Mammary epithelial cell (primary cell): ENCODE measurements at regions of chrX and their contacts with region 1.

Region 1: GRCh38 chrX:13700380-13700779 is 11.5 kb downstream of the RAB9A start:
- DNase-seq: no peak
- H3K4me3 ChIP-seq: no peak overlapping the region
- H3K27ac ChIP-seq: no peak overlapping the region
- H3K4me1 ChIP-seq: peaks cover 7% of the 10 kb centered on the region
- H3K27me3 ChIP-seq: no peaks in the 10 kb centered on the region
- CTCF ChIP-seq: no peak

Region 2: DNA sequence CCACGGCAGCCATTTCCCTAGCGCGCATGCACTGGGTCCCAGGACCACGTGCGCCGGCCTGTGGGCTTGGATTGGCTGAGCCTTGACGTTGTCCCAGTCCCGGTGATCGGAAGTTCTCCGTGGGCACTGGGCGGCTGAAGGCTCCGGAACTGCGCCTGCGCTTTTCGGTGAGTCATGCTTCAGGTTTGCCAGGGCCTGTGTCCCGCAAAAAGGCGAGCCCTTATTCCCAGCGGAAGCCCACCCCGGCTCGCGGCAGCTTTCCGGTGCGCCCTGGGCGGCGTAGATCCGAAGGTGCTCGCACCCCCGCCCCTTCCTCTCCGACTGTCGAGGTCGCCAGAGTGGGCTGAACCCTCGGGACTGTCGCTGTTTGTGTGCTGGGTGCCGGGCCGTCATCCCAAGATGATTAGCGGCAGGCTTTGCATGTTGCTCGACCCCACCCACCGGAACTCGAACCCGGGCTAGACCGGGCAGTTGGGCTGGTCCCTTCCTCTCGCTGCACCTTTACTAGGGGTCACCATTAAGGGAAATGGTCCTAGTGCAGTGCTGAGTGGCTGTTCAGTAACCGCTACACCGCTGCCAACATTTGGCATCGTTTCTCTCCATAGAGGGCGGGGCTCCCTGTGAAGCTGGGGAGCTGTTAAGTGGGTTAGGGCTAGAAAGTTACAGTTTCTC is 47.2 kb before region 1 on chrX and contains the start of gene TCEANC:
- CTCF ChIA-PET with region 1: no interaction called
- dilution Hi-C with region 1: no loop called
- in situ Hi-C with region 1: loop called in 1 of 2 experiments (anchors 10 kb)
- intact Hi-C with region 1: no loop called
- DNase-seq: peak; percentile 98
- H3K4me3 ChIP-seq: peak within 1 kb of the TSS; percentile 54 to 74 (median 70)
- H3K27ac ChIP-seq: peak within 1 kb of the TSS; percentile 82
- H3K4me1 ChIP-seq: peaks cover 11% of the 10 kb centered on the region
- H3K27me3 ChIP-seq: no peaks in the 10 kb centered on the region
- CTCF ChIP-seq: no peak
- total RNA-seq, gene TCEANC: 3.9 to 4.2 TPM

Region 3: DNA sequence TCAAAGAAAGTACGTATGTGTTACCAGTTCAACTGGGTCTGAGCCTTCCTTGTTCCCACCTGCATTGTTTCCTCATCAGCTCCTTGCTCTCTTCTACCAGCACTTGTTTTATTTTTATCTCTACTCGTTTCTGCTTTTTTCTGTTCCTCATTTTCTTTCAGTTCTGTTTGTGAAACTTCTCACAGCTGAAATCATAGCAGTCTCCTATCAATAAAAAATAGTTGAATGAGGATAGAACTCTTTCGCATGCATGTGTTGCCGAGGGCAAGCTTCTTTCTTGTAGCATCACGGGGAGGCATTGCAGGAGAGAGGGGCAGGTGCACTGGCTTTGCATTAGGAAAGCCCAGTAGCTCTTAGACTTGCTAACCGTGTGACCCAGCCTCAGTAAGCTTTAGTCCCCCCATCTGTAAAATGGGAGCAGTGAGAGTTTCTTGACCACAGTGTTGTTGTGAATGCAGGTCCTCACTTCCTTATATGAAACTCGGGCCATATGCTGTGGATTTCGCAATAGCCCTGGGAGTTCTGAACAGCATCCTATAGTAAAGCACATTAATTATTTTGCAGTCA is 58.9 kb after region 1 on chrX:
- CTCF ChIA-PET with region 1: no interaction called
- dilution Hi-C with region 1: loop called (anchors 5 kb)
- in situ Hi-C with region 1: no loop called
- intact Hi-C with region 1: no loop called
- DNase-seq: no peak
- H3K4me3 ChIP-seq: no peak overlapping the region
- H3K27ac ChIP-seq: no peak overlapping the region
- H3K4me1 ChIP-seq: no peaks in the 10 kb centered on the region
- H3K27me3 ChIP-seq: no peaks in the 10 kb centered on the region
- CTCF ChIP-seq: no peak